Activated T-helper 1 cell treated with anti-CD3 and anti-CD28 coated beads, Interleukin-12 subunit alpha, Interleukin-12 subunit beta, Interleukin-2, Interleukin-4 antibody, amounts not matched to agents 30 ng/mL and 10 ng/mL and 1 ng/mL, durations not matched to agents 14 hours and 24 hours and 36 hours (primary cell): ENCODE measurements at regions of chr4 and their contacts with region 1.

Region 1: DNA sequence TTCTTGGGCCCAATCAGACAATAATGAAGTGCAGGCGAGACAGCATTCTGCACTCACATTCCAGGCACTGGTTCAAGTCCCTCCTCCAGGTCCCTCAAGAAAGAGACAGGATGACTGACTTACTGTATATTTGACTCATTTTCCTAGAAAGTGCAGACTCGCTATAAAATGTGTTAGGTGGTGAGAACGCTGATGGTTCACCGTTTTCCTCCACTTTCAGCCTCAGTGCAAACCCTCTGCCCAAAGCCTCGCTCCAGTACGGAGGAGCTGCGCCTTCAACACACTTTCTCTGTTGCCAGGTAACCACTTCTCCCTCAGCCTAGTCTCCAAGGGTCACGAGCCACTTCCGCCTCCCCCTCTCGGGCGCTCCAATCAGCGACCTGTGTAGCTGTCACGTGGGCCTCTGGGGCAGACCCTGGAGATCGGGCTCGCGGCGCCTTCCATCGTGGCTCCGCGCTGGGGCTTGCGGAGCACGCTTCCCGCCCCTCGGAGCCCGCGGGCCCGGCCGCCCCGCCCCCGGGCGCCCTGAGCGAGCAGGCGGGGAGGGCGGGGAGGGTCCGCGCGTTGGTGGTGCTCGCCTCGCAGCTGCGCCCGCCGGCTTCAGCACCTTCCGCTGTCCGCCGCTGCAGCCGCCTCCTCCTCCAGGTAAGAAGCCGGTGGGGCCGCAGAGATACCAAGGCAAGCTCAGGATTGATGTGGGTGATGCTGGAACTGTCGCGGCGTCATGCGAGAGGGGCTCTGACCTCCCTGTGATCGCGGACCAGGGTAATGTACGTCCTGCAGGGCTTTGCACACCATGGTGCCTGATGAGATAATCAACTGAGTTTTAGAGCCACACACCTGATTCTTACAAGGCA is at the start of gene WDR17:
- DNase-seq: peak; percentile 65
- H3K4me3 Mint-ChIP-seq: peak within 1 kb of the TSS; percentile 89
- H3K27ac Mint-ChIP-seq: peak within 1 kb of the TSS; percentile 69
- H3K4me1 Mint-ChIP-seq: peaks cover 13% of the 10 kb centered on the region
- H3K27me3 Mint-ChIP-seq: peaks cover 15% of the 10 kb centered on the region
- total RNA-seq, gene WDR17: 1.5 and 1.6 TPM in 2 replicates

Region 2: GRCh38 chr4:175947117-175947722 is 118.4 kb before region 1 on chr4:
- intact Hi-C with region 1: loop called (anchors 10 kb)
- DNase-seq: no peak
- H3K4me3 Mint-ChIP-seq: no peak overlapping the region
- H3K27ac Mint-ChIP-seq: no peak overlapping the region
- H3K4me1 Mint-ChIP-seq: peaks cover 8% of the 10 kb centered on the region
- H3K27me3 Mint-ChIP-seq: peaks cover 9% of the 10 kb centered on the region

Region 3: DNA sequence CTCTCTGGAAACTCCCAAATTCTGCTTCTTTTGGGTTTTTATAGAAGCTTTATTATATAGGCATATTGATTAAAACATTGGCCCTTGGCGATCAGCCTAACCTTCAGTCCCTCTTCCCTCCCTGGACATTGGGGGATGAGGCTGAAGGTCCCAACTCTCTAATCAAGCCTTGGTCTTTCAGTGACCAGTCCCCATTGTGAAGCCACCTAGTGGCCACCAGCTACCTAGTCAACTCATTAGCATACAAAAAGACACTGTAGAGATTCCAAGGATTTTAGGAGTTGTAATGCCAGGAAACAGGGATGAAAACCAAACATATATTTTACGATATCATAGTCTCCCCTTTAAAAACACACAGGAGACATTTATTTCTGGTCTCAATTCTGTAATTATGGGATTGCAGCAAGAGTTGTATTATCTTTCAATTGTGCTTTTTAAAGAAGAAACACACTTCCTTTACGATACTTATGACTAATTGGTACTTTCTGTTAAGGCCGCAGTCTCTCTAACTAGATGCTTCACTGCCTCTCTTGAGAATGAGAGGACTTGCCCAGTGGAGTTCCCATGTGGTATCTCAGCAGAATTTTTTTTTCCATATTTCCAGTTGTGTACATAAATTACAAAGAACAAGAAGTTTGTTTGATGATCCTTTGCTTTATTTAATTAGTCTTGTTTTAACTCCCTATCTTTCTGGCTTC is 58.2 kb after region 1 on chr4:
- intact Hi-C with region 1: loop called (anchors 1 kb)
- DNase-seq: no peak
- H3K4me3 Mint-ChIP-seq: no peak overlapping the region
- H3K27ac Mint-ChIP-seq: no peak overlapping the region
- H3K4me1 Mint-ChIP-seq: peaks cover 10% of the 10 kb centered on the region
- H3K27me3 Mint-ChIP-seq: no peaks in the 10 kb centered on the region

Region 4: GRCh38 chr4:176195184-176195978 is 129.7 kb after region 1 on chr4 and contains the start of gene SPATA4:
- intact Hi-C with region 1: loop called (anchors 1 kb)
- DNase-seq: peak; percentile 88
- H3K4me3 Mint-ChIP-seq: peak within 1 kb of the TSS; percentile 70
- H3K27ac Mint-ChIP-seq: peak within 1 kb of the TSS; percentile 72
- H3K4me1 Mint-ChIP-seq: peaks cover 22% of the 10 kb centered on the region
- H3K27me3 Mint-ChIP-seq: peaks cover 33% of the 10 kb centered on the region
- total RNA-seq, gene SPATA4: not detected in 2 replicates